Heart left ventricle (tissue), 16 donors: ENCODE measurements at regions of chr9 and their contacts with region 1.

Region 1: GRCh38 chr9:71806901-71807307 is 38.6 kb upstream of the CEMIP2 start:
- DNase-seq: peak in 4 of 5 donors; percentile 60 to 66 (median 62)
- ATAC-seq: peak in 3 of 4 donors; percentile 94 to 98 (median 97)
- H3K4me3 ChIP-seq: no peak overlapping the region
- H3K27ac ChIP-seq: no peak overlapping the region
- H3K4me1 ChIP-seq: peaks cover 0 to 8% (median 3%) of the 10 kb centered on the region in 12 donors
- H3K27me3 ChIP-seq: no peaks in the 10 kb centered on the region
- CTCF ChIP-seq: peak; percentile 81 to 95 (median 90)
- POLR2A ChIP-seq: no peak

Region 2: DNA sequence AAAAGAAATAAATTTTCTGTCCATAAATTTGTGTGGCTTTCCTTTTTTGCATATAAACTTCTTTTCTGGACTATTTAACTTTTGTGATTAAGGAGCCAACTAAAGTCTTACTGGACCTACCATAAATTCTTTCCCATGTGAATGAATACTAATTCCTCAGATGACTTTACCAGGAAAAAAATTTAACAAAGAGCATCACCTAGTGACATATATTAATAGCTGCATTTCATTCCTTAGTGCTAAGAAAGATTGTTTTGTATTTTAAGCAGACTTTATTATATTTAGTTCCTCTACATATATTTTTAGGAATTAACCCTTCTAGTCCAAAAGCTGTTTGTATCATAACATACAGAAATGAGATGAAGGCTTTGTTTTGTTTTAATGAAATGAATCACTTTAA is 168.9 kb after region 1 on chr9:
- intact Hi-C with region 1: loop called in 1 of 10 experiments (anchors 2 kb)
- DNase-seq: no peak
- ATAC-seq: no peak
- H3K4me3 ChIP-seq: no peak overlapping the region
- H3K27ac ChIP-seq: no peak overlapping the region
- H3K4me1 ChIP-seq: peaks cover 0 to 8% (median 4%) of the 10 kb centered on the region in 12 donors
- H3K27me3 ChIP-seq: no peaks in the 10 kb centered on the region
- CTCF ChIP-seq: peak in 9 of 12 donors; percentile 8 to 46 (median 31)
- POLR2A ChIP-seq: no peak

Region 3: DNA sequence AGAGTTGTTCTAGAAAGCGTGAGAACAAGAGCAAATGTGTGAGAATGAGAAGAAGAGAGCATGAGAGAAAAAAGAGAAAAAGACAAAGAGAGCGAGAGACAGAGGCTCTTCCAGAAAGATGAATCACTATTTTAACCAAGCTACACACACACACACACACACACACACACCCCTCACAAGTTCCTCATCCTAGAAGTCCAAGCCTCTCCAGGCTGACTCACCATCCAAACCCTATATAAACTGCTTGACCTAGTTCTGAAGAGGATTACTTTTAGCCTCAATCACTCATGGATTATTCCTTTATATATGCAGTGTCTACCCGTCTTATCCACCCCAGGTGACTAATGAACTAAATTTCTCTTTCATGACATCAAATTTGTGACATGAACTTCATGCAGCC is 215.9 kb after region 1 on chr9:
- intact Hi-C with region 1: loop called (anchors 1 to 5 kb)
- DNase-seq: no peak
- ATAC-seq: no peak
- H3K4me3 ChIP-seq: no peak overlapping the region
- H3K27ac ChIP-seq: no peak overlapping the region
- H3K4me1 ChIP-seq: peaks cover 0 to 3% (median 0%) of the 10 kb centered on the region in 12 donors
- H3K27me3 ChIP-seq: no peaks in the 10 kb centered on the region
- CTCF ChIP-seq: no peak
- POLR2A ChIP-seq: no peak

Region 4: GRCh38 chr9:72262063-72262462 is 455.2 kb after region 1 on chr9:
- intact Hi-C with region 1: loop called in 1 of 10 experiments (anchors 10 kb)
- DNase-seq: no peak
- ATAC-seq: no peak
- H3K4me3 ChIP-seq: no peak overlapping the region
- H3K27ac ChIP-seq: no peak overlapping the region
- H3K4me1 ChIP-seq: no peaks in the 10 kb centered on the region
- H3K27me3 ChIP-seq: peaks cover 0 to 20% (median 0%) of the 10 kb centered on the region in 9 donors
- CTCF ChIP-seq: no peak
- POLR2A ChIP-seq: no peak

Region 5: GRCh38 chr9:72271613-72272478 is 464.9 kb after region 1 on chr9:
- intact Hi-C with region 1: loop called in 6 of 10 experiments (anchors 5 to 10 kb)
- DNase-seq: peak in 2 of 5 donors; percentile 30 to 36
- ATAC-seq: peak in 1 of 4 donors; percentile 56
- H3K4me3 ChIP-seq: no peak overlapping the region
- H3K27ac ChIP-seq: no peak overlapping the region
- H3K4me1 ChIP-seq: no peaks in the 10 kb centered on the region
- H3K27me3 ChIP-seq: no peaks in the 10 kb centered on the region
- CTCF ChIP-seq: peak; percentile 77 to 92 (median 87)
- POLR2A ChIP-seq: no peak